Naive thymus-derived CD8-positive, alpha-beta T cell (primary cell): ENCODE measurements at regions of chr4 and their contacts with region 1.

Region 1: GRCh38 chr4:86934771-86935565 is at the start of gene AFF1:
- DNase-seq: peak; percentile 83 to 92 (median 85)
- ATAC-seq: peak; percentile 74 to 77
- H3K4me3 Mint-ChIP-seq: peak within 1 kb of the TSS; percentile 85 to 97 (median 96)
- H3K27ac Mint-ChIP-seq: peak within 1 kb of the TSS; percentile 93 to 98 (median 96)
- H3K4me1 Mint-ChIP-seq: peaks cover 32 to 51% (median 50%) of the 10 kb centered on the region in 4 donors
- H3K27me3 Mint-ChIP-seq: no peaks in the 10 kb centered on the region
- polyA plus RNA-seq, gene AFF1: 9.0 to 13.7 (median 12.9) TPM

Region 2: GRCh38 chr4:86921608-86922252 is 13.2 kb before region 1 on chr4:
- POLR2A ChIA-PET with region 1: interaction called, 20 read pairs
- DNase-seq: no peak
- ATAC-seq: no peak
- H3K4me3 Mint-ChIP-seq: no peak overlapping the region
- H3K27ac Mint-ChIP-seq: no peak overlapping the region
- H3K4me1 Mint-ChIP-seq: peaks cover 0 to 3% (median 2%) of the 10 kb centered on the region in 4 donors
- H3K27me3 Mint-ChIP-seq: no peaks in the 10 kb centered on the region

Region 3: GRCh38 chr4:87006676-87007527 is 71.9 kb after region 1 on chr4:
- POLR2A ChIA-PET with region 1: interaction called, 162 read pairs
- DNase-seq: peak; percentile 83 to 94 (median 89)
- ATAC-seq: peak; percentile 85
- H3K4me3 Mint-ChIP-seq: peak overlapping the region; percentile 84 to 97 (median 96)
- H3K27ac Mint-ChIP-seq: peak overlapping the region; percentile 94 to 100 (median 98)
- H3K4me1 Mint-ChIP-seq: peaks cover 30 to 59% (median 51%) of the 10 kb centered on the region in 4 donors
- H3K27me3 Mint-ChIP-seq: no peaks in the 10 kb centered on the region

Region 4: GRCh38 chr4:87093443-87094123 is 158.6 kb after region 1 on chr4:
- POLR2A ChIA-PET with region 1: interaction called, 10 read pairs
- DNase-seq: peak in 9 of 10 donors; percentile 9 to 65 (median 42)
- ATAC-seq: peak; percentile 86 to 92
- H3K4me3 Mint-ChIP-seq: no peak overlapping the region
- H3K27ac Mint-ChIP-seq: peak overlapping the region; percentile 37 to 87 (median 68)
- H3K4me1 Mint-ChIP-seq: peaks cover 13 to 29% (median 18%) of the 10 kb centered on the region in 4 donors
- H3K27me3 Mint-ChIP-seq: no peaks in the 10 kb centered on the region

Region 5: GRCh38 chr4:87220094-87220822 is 285.3 kb after region 1 on chr4 and contains the start of gene KLHL8:
- POLR2A ChIA-PET with region 1: interaction called, 11 read pairs
- DNase-seq: peak; percentile 80 to 91 (median 86)
- ATAC-seq: peak; percentile 84 to 87
- H3K4me3 Mint-ChIP-seq: peak within 1 kb of the TSS; percentile 92 to 97 (median 94)
- H3K27ac Mint-ChIP-seq: peak within 1 kb of the TSS; percentile 59 to 97 (median 96)
- H3K4me1 Mint-ChIP-seq: peaks cover 11 to 23% (median 18%) of the 10 kb centered on the region in 4 donors
- H3K27me3 Mint-ChIP-seq: no peaks in the 10 kb centered on the region
- polyA plus RNA-seq, gene KLHL8: 10.3 to 13.7 (median 12.7) TPM